Spleen (tissue), 13 donors: ENCODE measurements at regions of chr4 and their contacts with region 1.

Region 1: DNA sequence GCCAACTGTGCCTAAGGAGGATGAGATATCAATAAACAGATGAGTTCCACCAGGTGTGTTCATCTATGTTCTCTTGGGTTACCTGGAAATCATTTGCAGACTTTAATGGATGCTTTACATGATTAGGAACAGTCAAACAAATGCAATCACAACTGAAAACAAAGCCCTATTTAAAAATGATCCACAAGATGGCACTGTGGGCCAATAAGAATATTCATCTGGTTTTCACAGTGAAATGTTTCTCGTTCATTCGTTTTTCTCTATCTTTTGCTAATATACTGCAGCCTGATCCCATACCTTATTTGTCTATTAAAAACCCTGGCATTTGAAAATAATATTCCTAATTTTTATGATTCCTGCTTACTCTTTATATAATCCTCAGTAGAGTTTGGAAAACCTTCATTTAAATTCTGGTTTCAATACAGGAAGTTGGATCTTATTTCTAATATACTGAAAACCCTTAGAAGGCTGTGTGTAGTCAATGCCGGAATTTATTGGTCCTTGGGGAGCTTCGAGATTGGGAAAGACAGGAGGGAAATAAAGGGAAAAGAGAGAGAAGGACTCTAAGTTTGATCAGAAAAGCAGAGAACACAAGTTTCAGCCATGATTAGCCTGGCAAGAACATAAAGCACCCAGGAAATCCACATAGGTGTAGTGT is 63.8 kb upstream of the TAPT1 start:
- DNase-seq: no peak
- H3K4me3 ChIP-seq: peak overlapping the region in 4 of 8 donors; percentile 7 to 40 (median 10)
- H3K27ac ChIP-seq: peak overlapping the region in 7 of 8 donors; percentile 44 to 71 (median 57)
- H3K4me1 ChIP-seq: peaks cover 0 to 13% (median 5%) of the 10 kb centered on the region in 6 donors
- H3K27me3 ChIP-seq: peaks cover 0 to 5% (median 0%) of the 10 kb centered on the region in 7 donors
- CTCF ChIP-seq: peak; percentile 35 to 73 (median 57)
- POLR2A ChIP-seq: no peak

Region 2: DNA sequence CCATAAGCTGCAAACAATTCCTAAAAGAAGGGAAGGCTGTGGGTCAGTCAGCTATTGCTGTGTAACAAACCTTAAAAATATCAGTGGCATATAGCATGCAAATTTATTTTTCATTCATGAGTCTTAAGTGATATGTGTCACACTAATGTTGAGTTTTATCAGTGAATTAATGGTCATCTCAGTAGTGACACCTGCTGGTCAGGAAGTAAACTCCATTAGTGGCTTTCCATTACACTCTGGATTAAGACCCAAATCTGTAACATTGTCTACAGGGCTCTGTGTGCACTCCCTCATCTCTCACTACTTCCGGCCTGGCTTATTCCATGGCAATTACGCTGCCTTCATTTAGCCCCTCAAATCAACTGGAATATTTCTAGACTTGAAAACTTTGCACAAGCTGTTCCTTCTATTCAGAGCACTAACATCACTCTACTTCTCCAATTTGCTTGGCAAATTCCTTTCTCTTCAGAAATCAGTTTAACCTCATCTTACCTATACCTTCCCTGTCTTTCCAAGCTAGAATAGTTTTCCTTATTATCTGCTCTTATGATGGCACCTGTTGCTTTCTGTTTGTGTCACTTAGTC is 153.6 kb after region 1 on chr4:
- intact Hi-C with region 1: loop called (anchors 5 kb)
- DNase-seq: no peak
- H3K4me3 ChIP-seq: no peak overlapping the region
- H3K27ac ChIP-seq: no peak overlapping the region
- H3K4me1 ChIP-seq: no peaks in the 10 kb centered on the region
- H3K27me3 ChIP-seq: no peaks in the 10 kb centered on the region
- CTCF ChIP-seq: peak; percentile 21 to 78 (median 65)
- POLR2A ChIP-seq: no peak

Region 3: DNA sequence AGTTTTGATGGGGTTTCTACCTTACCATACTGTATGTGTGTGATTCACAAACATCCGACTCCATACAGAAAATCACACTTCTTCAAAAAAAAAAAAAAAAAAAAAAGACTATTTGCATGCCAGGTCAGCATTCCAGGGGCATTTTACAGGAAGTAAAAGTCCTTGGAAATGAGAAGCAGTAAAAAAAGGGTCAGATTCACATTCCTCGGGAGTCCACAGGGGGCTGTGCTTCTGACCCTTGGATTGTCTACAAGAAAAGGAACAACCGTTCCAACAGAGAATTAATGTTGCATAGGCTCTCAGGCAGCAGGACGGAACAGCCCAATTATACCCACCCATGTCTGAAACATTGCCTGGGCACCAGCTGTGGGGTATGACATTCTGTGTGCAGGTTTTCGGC is 318.1 kb after region 1 on chr4:
- intact Hi-C with region 1: no loop called
- DNase-seq: no peak
- H3K4me3 ChIP-seq: no peak overlapping the region
- H3K27ac ChIP-seq: peak overlapping the region in 1 of 8 donors; percentile 5
- H3K4me1 ChIP-seq: peaks cover 0 to 24% (median 4%) of the 10 kb centered on the region in 6 donors
- H3K27me3 ChIP-seq: no peaks in the 10 kb centered on the region
- CTCF ChIP-seq: no peak
- POLR2A ChIP-seq: no peak

Region 4: GRCh38 chr4:17324386-17324830 is 1034.4 kb after region 1 on chr4:
- intact Hi-C with region 1: loop called (anchors 10 kb)
- DNase-seq: no peak
- H3K4me3 ChIP-seq: no peak overlapping the region
- H3K27ac ChIP-seq: peak overlapping the region in 2 of 8 donors; percentile 4 to 10
- H3K4me1 ChIP-seq: peaks cover 3 to 20% (median 12%) of the 10 kb centered on the region in 6 donors
- H3K27me3 ChIP-seq: no peaks in the 10 kb centered on the region
- CTCF ChIP-seq: peak in 7 of 11 experiments; percentile 31 to 63 (median 47)
- POLR2A ChIP-seq: no peak

Region 5: DNA sequence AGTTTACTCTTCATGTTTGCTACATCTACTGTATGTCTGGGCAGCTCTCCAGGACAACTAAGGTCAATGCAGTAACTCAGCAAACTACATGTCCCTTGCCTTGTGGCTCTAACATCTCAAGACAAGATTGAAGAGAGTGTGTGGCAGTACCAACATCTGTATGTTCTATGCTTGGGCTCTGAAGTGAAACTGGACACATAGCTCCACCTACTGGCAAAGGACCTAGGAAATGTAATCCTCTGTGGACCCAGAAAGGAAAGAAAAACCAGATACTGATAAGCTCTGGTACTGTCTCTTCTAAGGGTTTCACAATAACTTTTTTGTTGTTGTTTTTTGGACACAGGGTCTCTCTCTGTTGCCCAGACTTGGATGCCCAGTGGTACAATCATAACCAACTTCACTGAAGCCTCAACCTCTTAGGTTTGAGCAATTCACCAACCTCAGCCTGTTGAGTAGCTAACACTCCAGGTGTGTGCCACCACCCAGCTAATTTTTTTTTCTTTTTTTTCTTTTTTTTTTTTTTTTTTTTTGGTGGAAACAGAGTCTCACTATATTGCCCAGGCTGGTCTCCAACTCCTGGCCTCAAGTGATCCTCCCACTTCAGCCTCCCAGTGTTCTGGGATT is 1157.8 kb after region 1 on chr4:
- intact Hi-C with region 1: loop called (anchors 10 kb)
- DNase-seq: no peak
- H3K4me3 ChIP-seq: no peak overlapping the region
- H3K27ac ChIP-seq: no peak overlapping the region
- H3K4me1 ChIP-seq: no peaks in the 10 kb centered on the region
- H3K27me3 ChIP-seq: no peaks in the 10 kb centered on the region
- CTCF ChIP-seq: peak in 10 of 11 experiments; percentile 23 to 74 (median 63)
- POLR2A ChIP-seq: no peak